Activated CD8-positive, alpha-beta T cell treated with anti-CD3 and anti-CD28 coated beads for 36 hours (primary cell): ENCODE measurements at regions of chr19 and their contacts with region 1.

Region 1: DNA sequence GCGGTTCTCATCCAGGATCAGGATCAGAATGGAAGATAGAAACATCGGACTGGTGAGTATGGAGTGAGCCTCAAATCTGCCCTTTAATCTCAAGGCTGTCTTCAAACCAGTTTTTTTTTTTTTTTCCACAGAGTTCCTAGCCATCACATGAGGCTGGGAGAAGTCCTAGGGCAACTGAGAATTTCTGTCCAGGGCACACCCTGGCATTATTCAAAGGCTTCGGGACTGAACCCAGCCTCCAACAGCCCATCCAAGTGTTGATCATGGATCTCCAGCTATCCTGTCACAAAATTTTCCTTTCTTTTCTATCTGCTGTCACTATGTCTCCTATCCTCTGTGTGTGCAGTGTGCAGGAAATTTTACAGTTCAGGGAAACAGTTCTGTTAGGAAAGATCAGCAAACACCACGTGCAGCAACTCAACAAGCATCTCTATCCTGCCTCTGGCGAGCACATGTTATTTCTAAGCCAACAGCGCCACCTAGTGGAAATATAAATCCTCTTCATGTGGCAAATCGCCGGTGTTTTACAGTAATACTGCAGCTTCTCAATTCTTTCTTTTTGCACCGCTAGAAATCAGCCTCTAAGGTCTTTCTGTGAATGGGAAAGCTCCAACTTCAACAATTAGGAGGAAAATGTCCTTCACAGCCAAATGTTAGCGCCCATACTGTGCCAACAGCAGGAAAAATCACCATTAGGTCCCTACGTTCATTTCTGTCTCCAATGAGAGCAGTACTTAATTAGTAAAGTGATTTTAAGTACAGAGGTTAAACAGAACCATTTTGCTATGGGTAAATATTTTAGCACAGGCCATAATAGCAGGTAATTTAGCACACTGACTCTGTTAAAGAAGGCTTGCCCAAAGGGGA is 21.4 kb upstream of the ZNF181 start:
- DNase-seq: peak; percentile 69
- ATAC-seq: peak; percentile 56
- H3K4me3 Mint-ChIP-seq: no peak overlapping the region
- H3K27ac Mint-ChIP-seq: no peak overlapping the region
- H3K4me1 Mint-ChIP-seq: peaks cover 2% of the 10 kb centered on the region
- H3K27me3 Mint-ChIP-seq: peaks cover 19% of the 10 kb centered on the region
- CTCF ChIP-seq: peak; percentile 72

Region 2: GRCh38 chr19:34512254-34512822 is 200.3 kb before region 1 on chr19:
- CTCF ChIA-PET with region 1: no interaction called
- POLR2A ChIA-PET with region 1: no interaction called
- intact Hi-C with region 1: no loop called
- DNase-seq: no peak
- ATAC-seq: no peak
- H3K4me3 Mint-ChIP-seq: no peak overlapping the region
- H3K27ac Mint-ChIP-seq: no peak overlapping the region
- H3K4me1 Mint-ChIP-seq: no peaks in the 10 kb centered on the region
- H3K27me3 Mint-ChIP-seq: peaks cover 10% of the 10 kb centered on the region
- CTCF ChIP-seq: no peak

Region 3: DNA sequence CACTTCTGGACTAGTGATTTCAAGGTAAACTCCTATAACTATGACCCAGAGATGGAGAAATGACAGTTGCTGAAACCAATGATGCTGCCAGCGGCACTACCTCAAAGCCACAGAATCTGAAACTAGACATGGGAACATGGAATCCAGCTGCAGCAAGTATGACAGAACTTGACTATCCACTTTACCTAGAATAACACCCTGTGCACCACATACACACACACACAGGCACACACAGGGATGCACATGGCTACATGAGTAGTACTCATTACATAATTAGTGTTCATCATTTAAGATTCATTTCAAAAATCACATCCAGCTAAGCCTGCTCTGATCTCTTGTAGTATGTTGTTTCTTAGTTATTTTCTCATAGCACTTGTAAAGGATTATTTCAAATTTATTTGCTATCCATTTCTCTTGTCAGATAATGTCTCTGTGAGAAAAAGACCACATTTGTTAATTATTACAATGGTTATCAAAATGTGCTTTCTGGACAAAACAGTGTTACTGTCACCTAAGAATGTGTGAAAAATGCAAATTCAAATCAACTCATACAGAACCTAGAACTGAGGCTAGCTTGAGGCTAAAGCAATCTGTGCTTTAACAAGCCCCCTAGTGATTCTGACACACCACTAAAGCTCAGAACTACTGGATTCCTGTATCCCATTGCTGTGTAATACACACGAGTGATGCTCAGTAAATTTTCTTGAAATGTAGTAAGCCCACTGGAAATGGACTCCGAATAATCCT is 171.6 kb before region 1 on chr19:
- CTCF ChIA-PET with region 1: no interaction called
- POLR2A ChIA-PET with region 1: no interaction called
- intact Hi-C with region 1: no loop called
- DNase-seq: no peak
- ATAC-seq: no peak
- H3K4me3 Mint-ChIP-seq: no peak overlapping the region
- H3K27ac Mint-ChIP-seq: no peak overlapping the region
- H3K4me1 Mint-ChIP-seq: no peaks in the 10 kb centered on the region
- H3K27me3 Mint-ChIP-seq: peaks cover 19% of the 10 kb centered on the region
- CTCF ChIP-seq: no peak

Region 4: DNA sequence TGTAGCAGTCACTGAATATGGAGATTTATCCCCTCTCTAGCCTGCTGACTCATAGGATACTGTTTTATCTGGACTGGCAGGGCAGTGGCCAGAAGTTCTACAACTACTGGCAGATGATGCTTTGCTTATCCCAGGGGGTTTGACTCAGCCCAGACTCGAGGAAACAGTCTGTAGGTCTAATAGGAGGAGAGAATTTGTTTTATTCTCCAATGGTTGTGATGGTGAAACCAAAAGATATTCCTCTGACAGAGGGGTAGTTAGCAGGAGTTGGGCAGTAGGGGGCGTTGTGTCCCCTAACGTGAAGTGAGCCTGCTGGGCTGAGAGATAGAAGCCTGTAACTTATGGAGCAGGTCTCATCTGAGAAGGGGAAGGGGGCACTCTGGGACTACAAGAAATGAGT is 156.1 kb before region 1 on chr19:
- CTCF ChIA-PET with region 1: interaction called, 10 read pairs
- POLR2A ChIA-PET with region 1: no interaction called
- intact Hi-C with region 1: no loop called
- DNase-seq: peak; percentile 59
- ATAC-seq: peak; percentile 64
- H3K4me3 Mint-ChIP-seq: no peak overlapping the region
- H3K27ac Mint-ChIP-seq: no peak overlapping the region
- H3K4me1 Mint-ChIP-seq: no peaks in the 10 kb centered on the region
- H3K27me3 Mint-ChIP-seq: peaks cover 18% of the 10 kb centered on the region
- CTCF ChIP-seq: peak; percentile 51